ENCODE measurements at regions of chr10 and their contacts with region 1.

Region 1: DNA sequence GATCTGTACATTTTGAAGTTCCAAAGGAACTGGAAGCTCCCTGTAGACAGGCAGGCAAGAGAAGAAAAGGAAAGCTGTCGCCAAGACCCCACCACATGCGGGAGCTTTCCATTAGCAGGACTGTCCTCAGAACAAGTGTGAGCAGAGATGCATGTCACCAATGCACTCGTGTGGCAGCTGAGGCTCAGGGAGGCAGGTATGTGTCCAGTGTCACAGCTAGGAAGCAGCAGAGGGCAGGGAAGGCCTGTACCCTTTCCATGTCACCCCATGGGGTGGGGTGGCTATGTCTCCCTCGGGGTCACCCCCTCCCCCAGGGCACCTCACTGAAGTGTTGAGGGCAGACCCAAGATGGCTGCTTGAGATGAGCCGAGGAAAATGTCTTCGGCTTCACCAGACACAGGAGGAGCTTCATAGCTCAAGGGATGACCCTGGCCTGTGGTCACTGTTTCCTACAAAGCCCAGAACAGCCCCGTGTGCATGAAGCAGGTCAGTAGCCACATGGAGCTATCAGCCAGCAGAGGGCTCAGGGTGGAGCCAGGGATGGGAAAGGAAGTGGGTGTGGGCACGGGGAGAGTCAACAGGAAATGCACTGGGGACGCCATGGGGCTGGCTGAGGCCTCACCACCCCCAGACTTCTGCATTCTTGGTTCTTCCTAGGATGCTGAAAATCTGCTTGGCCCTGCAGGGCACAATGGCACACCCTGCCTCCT is 96.6 kb downstream of the FAM53B start:
- DNase-seq: peak; percentile 87
- ATAC-seq: peak; percentile 80
- H3K4me3 Mint-ChIP-seq: peak overlapping the region; percentile 70
- H3K27ac Mint-ChIP-seq: peak overlapping the region; percentile 92
- H3K4me1 Mint-ChIP-seq: peaks cover 78% of the 10 kb centered on the region
- H3K27me3 Mint-ChIP-seq: no peaks in the 10 kb centered on the region

Region 2: GRCh38 chr10:124560377-124561105 is 87.0 kb before region 1 on chr10:
- CTCF ChIA-PET with region 1: no interaction called
- POLR2A ChIA-PET with region 1: no interaction called
- DNase-seq: no peak
- ATAC-seq: no peak
- H3K4me3 Mint-ChIP-seq: no peak overlapping the region
- H3K27ac Mint-ChIP-seq: no peak overlapping the region
- H3K4me1 Mint-ChIP-seq: no peaks in the 10 kb centered on the region
- H3K27me3 Mint-ChIP-seq: no peaks in the 10 kb centered on the region

Region 3: GRCh38 chr10:124636271-124636995 is 11.1 kb before region 1 on chr10:
- CTCF ChIA-PET with region 1: interaction called, 10 read pairs
- POLR2A ChIA-PET with region 1: no interaction called
- DNase-seq: no peak
- ATAC-seq: peak; percentile 54
- H3K4me3 Mint-ChIP-seq: no peak overlapping the region
- H3K27ac Mint-ChIP-seq: peak overlapping the region; percentile 55
- H3K4me1 Mint-ChIP-seq: peaks cover 49% of the 10 kb centered on the region
- H3K27me3 Mint-ChIP-seq: no peaks in the 10 kb centered on the region

Region 4: DNA sequence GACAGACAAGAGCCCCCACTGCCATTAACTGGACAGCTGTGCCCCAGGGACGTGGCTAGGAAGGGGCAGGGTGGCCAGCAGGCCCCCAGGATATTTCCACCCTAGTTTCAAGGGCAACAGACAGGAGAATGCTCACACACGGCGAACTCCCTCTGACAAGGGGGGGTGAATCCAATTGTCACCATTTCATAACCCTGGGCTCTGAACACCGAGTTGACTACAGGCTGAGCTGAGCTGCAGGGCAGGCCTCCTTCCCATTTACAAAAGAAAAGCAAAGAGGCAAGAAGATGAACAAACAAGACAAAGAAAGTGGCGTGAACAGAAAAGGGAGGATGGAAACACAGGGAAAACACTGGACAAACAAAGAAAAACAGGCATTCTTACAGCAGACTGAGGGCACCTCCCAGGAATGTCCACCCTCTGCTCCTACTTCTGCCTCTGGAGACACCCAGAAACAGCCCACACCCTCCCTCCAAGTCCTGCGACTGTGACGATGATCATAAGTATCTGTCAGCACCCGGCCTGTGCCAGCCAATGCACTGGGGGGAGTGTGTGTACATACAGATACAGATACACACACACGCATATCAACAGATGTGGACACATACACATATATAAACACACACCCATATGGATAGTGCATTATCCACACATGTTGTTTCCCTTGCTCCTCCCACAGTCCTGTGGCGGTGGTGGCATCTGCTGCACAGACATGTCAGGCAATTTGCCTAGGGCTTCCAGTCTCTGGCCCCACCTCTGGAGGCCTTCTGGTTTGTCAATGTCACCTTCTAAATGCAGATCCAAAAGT is 30.4 kb after region 1 on chr10:
- CTCF ChIA-PET with region 1: interaction called, 10 read pairs
- POLR2A ChIA-PET with region 1: interaction called, 9 read pairs
- DNase-seq: no peak
- ATAC-seq: peak; percentile 50
- H3K4me3 Mint-ChIP-seq: peak overlapping the region; percentile 56
- H3K27ac Mint-ChIP-seq: peak overlapping the region; percentile 84
- H3K4me1 Mint-ChIP-seq: peaks cover 55% of the 10 kb centered on the region
- H3K27me3 Mint-ChIP-seq: no peaks in the 10 kb centered on the region

Region 5: DNA sequence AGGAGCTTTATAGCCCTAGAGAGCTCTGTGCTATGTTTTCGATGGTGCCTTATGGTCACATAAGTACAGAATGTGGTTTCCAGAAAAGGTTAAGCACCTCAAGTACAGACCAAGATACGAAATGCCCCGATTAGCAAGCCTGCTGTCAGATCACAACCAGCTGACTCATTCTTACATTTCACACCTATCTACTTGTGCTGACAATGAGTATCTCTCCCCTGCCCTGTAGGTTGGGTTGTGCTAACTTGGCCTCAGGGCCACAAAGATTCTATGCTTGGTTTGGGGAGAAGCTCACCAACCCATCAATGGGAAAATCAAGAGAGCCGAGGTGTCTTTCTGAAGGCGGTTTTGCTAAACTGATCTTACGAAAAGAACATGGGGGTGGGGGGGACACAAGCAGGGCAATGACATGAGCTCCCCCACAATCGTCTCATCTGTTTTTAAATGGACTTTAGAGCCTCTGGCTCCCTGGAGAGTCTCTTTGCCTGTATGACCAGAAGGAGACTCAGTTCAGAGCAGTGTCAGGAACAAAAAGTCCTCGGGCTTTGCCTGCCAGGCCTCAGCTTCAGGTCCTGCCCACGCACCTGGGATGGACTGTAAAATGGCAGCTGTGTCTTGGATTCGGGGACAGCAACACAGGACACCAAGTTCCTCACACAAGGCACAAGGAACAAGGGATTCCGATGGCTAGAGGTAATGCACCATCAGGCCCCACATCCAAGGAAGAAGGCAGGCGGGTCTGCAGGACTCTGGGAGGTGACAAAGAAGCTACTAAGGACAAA is 41.5 kb after region 1 on chr10:
- CTCF ChIA-PET with region 1: interaction called, 53 read pairs
- POLR2A ChIA-PET with region 1: interaction called, 7 read pairs
- DNase-seq: peak; percentile 67
- ATAC-seq: peak; percentile 92
- H3K4me3 Mint-ChIP-seq: peak overlapping the region; percentile 10
- H3K27ac Mint-ChIP-seq: peak overlapping the region; percentile 76
- H3K4me1 Mint-ChIP-seq: peaks cover 64% of the 10 kb centered on the region
- H3K27me3 Mint-ChIP-seq: no peaks in the 10 kb centered on the region

Region 6: DNA sequence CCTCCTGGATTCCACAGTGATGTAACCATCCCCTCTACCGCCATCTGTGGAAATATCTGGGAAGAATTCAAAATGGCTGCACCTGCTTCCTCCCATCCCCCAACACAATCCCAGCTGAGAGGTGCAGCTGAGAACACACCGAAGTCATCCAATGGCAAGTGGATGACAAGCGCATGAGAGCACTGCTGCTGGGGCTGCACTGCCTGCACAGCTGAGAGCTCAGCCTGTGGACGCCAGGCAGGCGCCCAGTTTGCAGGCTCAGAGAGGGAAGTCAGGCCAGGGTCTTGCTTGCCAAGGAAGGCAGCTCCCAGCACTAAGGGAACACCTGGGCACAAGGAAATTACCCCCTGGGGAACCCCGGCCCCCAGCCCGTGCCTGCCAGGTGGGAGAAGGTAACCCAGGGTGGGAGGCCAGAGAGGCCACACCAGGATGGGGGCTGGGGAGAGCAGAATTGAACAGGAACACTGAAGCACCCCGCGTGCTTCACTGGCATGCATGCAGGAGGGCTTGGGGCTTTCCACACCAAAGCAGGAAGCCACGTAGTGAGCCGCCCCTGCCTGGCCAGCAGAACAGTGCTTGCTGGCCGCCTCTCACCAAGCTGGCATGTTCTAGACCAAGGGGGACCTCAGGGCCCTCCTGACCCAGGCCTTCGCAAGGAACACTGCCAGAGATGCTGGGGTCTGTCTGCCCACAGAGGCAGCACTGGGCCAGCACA is 50.4 kb after region 1 on chr10:
- CTCF ChIA-PET with region 1: interaction called, 24 read pairs
- POLR2A ChIA-PET with region 1: interaction called, 7 read pairs
- DNase-seq: peak; percentile 42
- ATAC-seq: peak; percentile 24
- H3K4me3 Mint-ChIP-seq: peak overlapping the region; percentile 6
- H3K27ac Mint-ChIP-seq: peak overlapping the region; percentile 92
- H3K4me1 Mint-ChIP-seq: peaks cover 94% of the 10 kb centered on the region
- H3K27me3 Mint-ChIP-seq: no peaks in the 10 kb centered on the region

Region 7: GRCh38 chr10:124732931-124733570 is 85.5 kb after region 1 on chr10:
- CTCF ChIA-PET with region 1: interaction called, 20 read pairs
- POLR2A ChIA-PET with region 1: interaction called, 3 read pairs
- DNase-seq: no peak
- ATAC-seq: peak; percentile 46
- H3K4me3 Mint-ChIP-seq: peak overlapping the region; percentile 12
- H3K27ac Mint-ChIP-seq: peak overlapping the region; percentile 64
- H3K4me1 Mint-ChIP-seq: peaks cover 88% of the 10 kb centered on the region
- H3K27me3 Mint-ChIP-seq: no peaks in the 10 kb centered on the region